ENCODE measurements at regions of chr4 and their contacts with region 1.

Region 1: GRCh38 chr4:37826295-37827029 is at the start of gene PGM2:
- DNase-seq: peak; percentile 92
- H3K4me3 ChIP-seq: peak within 1 kb of the TSS; percentile 91
- H3K27ac ChIP-seq: peak within 1 kb of the TSS; percentile 60
- H3K4me1 ChIP-seq: peaks cover 30% of the 10 kb centered on the region
- CTCF ChIP-seq: 0 out of 2 replicates have a peak, but pooled peaks have one; percentile 21
- total RNA-seq, gene PGM2: 52.7 and 67.4 TPM in 2 replicates

Region 2: GRCh38 chr4:37837446-37837845 is 11.0 kb after region 1 on chr4:
- CTCF ChIA-PET with region 1: interaction called, 4 read pairs
- POLR2A ChIA-PET with region 1: interaction called, 13 read pairs
- intact Hi-C with region 1: no loop called
- DNase-seq: peak; percentile 35
- H3K4me3 ChIP-seq: peak overlapping the region; percentile 7
- H3K27ac ChIP-seq: peak overlapping the region; percentile 46
- H3K4me1 ChIP-seq: peaks cover 17% of the 10 kb centered on the region
- CTCF ChIP-seq: no peak

Measured in OCI-LY7 (cell line).